ENCODE measurements at regions of chr3 and their contacts with region 1.

Region 1: GRCh38 chr3:100400780-100401673 is at the starts of genes LNP1 and TOMM70:
- DNase-seq: peak; percentile 99
- H3K4me3 ChIP-seq: peak within 1 kb of the TSS; percentile 97 to 99
- H3K27ac ChIP-seq: peak within 1 kb of the TSS; percentile 95 to 99
- H3K4me1 ChIP-seq: peaks cover 0 to 55% (median 32%) of the 10 kb centered on the region in 4 donors
- H3K27me3 ChIP-seq: no peaks in the 10 kb centered on the region
- CTCF ChIP-seq: no peak

Region 2: DNA sequence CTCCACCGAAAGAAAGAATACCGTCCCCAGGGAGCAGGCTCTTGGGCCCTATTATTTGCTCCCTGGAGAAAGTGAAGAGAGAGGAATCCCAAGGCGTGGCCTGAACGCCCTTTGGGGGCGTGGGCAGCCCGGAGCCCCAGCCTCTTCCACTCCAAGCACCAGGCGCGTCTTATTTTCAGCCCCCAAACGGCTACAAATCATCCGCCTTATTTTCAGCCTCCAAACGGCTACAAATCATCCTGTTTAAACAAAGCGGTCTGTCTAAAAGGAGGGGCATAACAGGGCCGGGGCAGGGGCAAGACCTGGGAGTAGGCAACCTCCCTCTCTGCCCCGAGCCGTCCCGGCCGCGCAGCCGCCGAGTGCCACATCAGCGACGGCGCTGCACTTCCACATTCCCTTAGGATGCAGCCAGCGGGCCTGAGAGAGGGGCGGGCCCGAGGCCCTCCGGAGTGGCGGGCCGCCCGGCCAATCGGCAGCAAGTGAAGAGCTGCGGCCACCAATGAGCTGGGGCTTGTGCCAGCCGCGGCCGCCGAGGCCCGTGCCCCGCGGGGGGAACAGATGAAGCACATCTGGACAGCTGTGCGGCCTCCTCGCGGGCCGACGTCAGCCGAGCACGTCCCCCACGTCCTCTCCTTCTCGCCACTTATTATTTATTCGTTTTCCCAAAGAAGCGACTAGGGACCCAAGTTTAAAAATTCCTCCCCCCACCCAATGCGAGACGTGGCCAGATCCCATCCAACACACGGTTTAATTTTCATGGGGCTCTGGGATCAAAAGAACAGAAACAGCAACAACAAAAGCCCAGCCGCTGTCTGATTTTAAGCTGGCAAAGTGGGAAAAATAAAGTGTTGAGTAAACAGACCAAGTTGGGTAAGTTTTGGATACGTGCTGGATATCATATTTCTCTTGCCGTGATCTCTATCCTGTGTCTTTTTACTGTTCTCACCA is 91.3 kb after region 1 on chr3 and contains the start of gene TMEM45A:
- intact Hi-C with region 1: loop called (anchors 5 kb)
- DNase-seq: peak; percentile 96 to 99
- H3K4me3 ChIP-seq: peak within 1 kb of the TSS; percentile 51 to 54
- H3K27ac ChIP-seq: peak within 1 kb of the TSS; percentile 82 to 84
- H3K4me1 ChIP-seq: peaks cover 0 to 39% (median 13%) of the 10 kb centered on the region in 4 donors
- H3K27me3 ChIP-seq: no peaks in the 10 kb centered on the region
- CTCF ChIP-seq: peak in 1 of 2 experiments; percentile 15

Region 3: GRCh38 chr3:100756441-100756840 is 355.4 kb after region 1 on chr3:
- intact Hi-C with region 1: no loop called
- DNase-seq: peak in 1 of 2 donors; percentile 58
- H3K4me3 ChIP-seq: no peak overlapping the region
- H3K27ac ChIP-seq: peak overlapping the region in 1 of 2 donors; percentile 48
- H3K4me1 ChIP-seq: peaks cover 0 to 55% (median 0%) of the 10 kb centered on the region in 4 donors
- H3K27me3 ChIP-seq: no peaks in the 10 kb centered on the region
- CTCF ChIP-seq: no peak

Measured in tibial artery (tissue), 4 donors.